Activated CD8-positive, alpha-beta T cell treated with anti-CD3 and anti-CD28 coated beads for 36 hours (primary cell): ENCODE measurements at regions of chr2 and their contacts with region 1.

Region 1: DNA sequence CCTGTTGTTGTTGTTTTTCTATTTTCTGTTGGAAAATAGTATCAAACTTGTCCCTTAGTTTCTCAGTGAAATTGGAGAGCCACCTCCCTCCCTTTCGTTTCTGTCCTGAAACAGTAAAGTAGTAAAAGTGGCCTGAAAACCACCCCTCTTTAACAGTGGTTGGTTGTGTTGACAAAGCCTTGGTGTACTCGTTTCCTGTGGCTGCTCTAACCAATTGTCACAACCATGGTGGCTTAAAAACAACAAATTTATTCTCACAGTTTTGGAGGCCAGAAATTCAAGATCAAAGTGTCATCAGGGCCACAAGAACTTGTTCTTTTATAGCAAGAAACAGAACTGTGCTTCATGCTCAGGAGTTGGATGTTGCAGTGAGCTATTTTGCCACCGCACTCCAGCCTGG is 4.0 kb upstream of the DYSF start:
- DNase-seq: no peak
- ATAC-seq: no peak
- H3K4me3 Mint-ChIP-seq: no peak overlapping the region
- H3K27ac Mint-ChIP-seq: no peak overlapping the region
- H3K4me1 Mint-ChIP-seq: peaks cover 13% of the 10 kb centered on the region
- H3K27me3 Mint-ChIP-seq: peaks cover 9% of the 10 kb centered on the region
- CTCF ChIP-seq: no peak

Region 2: GRCh38 chr2:71460595-71461303 is 11.4 kb after region 1 on chr2:
- CTCF ChIA-PET with region 1: interaction called, 15 read pairs
- POLR2A ChIA-PET with region 1: no interaction called
- intact Hi-C with region 1: no loop called
- DNase-seq: no peak
- ATAC-seq: no peak
- H3K4me3 Mint-ChIP-seq: no peak overlapping the region
- H3K27ac Mint-ChIP-seq: no peak overlapping the region
- H3K4me1 Mint-ChIP-seq: peaks cover 2% of the 10 kb centered on the region
- H3K27me3 Mint-ChIP-seq: peaks cover 6% of the 10 kb centered on the region
- CTCF ChIP-seq: peak; percentile 67